ENCODE measurements at regions of chr14 and their contacts with region 1.

Region 1: GRCh38 chr14:68232300-68233055 is 412.9 kb downstream of the RAD51B start:
- DNase-seq: peak; percentile 99
- H3K4me3 Mint-ChIP-seq: no peak overlapping the region
- H3K27ac Mint-ChIP-seq: no peak overlapping the region
- H3K4me1 Mint-ChIP-seq: no peaks in the 10 kb centered on the region
- H3K27me3 Mint-ChIP-seq: no peaks in the 10 kb centered on the region
- CTCF ChIP-seq: no peak

Region 2: DNA sequence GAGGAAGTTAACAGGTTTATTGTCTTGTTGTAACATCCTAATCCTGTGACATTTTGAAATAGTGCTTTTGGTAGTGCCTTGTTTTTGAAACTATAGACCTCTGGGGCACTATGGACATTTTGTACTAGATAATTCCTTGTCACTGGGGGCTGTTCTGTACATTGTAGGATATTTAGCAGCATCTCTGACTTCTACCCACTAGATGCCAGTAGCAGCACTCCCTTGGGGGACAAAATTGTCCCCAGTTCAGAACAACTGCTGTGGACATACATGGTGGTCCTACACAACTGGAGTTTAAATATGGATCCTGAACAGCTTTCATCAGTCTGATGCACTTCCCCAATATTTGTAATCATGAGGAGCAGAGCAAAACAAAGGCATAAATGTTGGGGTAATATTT is 148.2 kb before region 1 on chr14:
- CTCF ChIA-PET with region 1: interaction called, 3 read pairs
- POLR2A ChIA-PET with region 1: interaction called, 3 read pairs
- intact Hi-C with region 1: loop called (anchors 5 kb)
- DNase-seq: peak; percentile 8
- H3K4me3 Mint-ChIP-seq: no peak overlapping the region
- H3K27ac Mint-ChIP-seq: no peak overlapping the region
- H3K4me1 Mint-ChIP-seq: peaks cover 18% of the 10 kb centered on the region
- H3K27me3 Mint-ChIP-seq: no peaks in the 10 kb centered on the region
- CTCF ChIP-seq: peak; percentile 12

Region 3: GRCh38 chr14:68111097-68111852 is 121.2 kb before region 1 on chr14:
- CTCF ChIA-PET with region 1: no interaction called
- POLR2A ChIA-PET with region 1: no interaction called
- intact Hi-C with region 1: no loop called
- DNase-seq: no peak
- H3K4me3 Mint-ChIP-seq: no peak overlapping the region
- H3K27ac Mint-ChIP-seq: no peak overlapping the region
- H3K4me1 Mint-ChIP-seq: peaks cover 10% of the 10 kb centered on the region
- H3K27me3 Mint-ChIP-seq: no peaks in the 10 kb centered on the region
- CTCF ChIP-seq: no peak

Region 4: GRCh38 chr14:68210729-68211299 is 21.7 kb before region 1 on chr14:
- CTCF ChIA-PET with region 1: no interaction called
- POLR2A ChIA-PET with region 1: interaction called, 24 read pairs
- intact Hi-C with region 1: no loop called
- DNase-seq: peak; percentile 79
- H3K4me3 Mint-ChIP-seq: peak overlapping the region; percentile 56
- H3K27ac Mint-ChIP-seq: peak overlapping the region; percentile 87
- H3K4me1 Mint-ChIP-seq: peaks cover 13% of the 10 kb centered on the region
- H3K27me3 Mint-ChIP-seq: no peaks in the 10 kb centered on the region
- CTCF ChIP-seq: no peak

Measured in MCF 10A (cell line).